HEK293 (cell line): ENCODE measurements at regions of chr17 and their contacts with region 1.

Region 1: GRCh38 chr17:77331301-77331864 is 190.6 kb downstream of the SEC14L1 start:
- H3K4me3 ChIP-seq: peak overlapping the region; percentile 19; the same call in 1 of the 2 replicates
- H3K27ac ChIP-seq: no peak overlapping the region
- H3K4me1 ChIP-seq: 0 out of 2 replicates have a peak, but pooled peaks cover 2% of the 10 kb centered on the region
- CTCF ChIP-seq: peak; percentile 98

Region 2: GRCh38 chr17:77235370-77235941 is 95.9 kb before region 1 on chr17:
- CTCF ChIA-PET with region 1: no interaction called
- POLR2A ChIA-PET with region 1: no interaction called
- H3K4me3 ChIP-seq: no peak overlapping the region
- H3K27ac ChIP-seq: no peak overlapping the region
- H3K4me1 ChIP-seq: no peaks in the 10 kb centered on the region
- CTCF ChIP-seq: no peak

Region 3: DNA sequence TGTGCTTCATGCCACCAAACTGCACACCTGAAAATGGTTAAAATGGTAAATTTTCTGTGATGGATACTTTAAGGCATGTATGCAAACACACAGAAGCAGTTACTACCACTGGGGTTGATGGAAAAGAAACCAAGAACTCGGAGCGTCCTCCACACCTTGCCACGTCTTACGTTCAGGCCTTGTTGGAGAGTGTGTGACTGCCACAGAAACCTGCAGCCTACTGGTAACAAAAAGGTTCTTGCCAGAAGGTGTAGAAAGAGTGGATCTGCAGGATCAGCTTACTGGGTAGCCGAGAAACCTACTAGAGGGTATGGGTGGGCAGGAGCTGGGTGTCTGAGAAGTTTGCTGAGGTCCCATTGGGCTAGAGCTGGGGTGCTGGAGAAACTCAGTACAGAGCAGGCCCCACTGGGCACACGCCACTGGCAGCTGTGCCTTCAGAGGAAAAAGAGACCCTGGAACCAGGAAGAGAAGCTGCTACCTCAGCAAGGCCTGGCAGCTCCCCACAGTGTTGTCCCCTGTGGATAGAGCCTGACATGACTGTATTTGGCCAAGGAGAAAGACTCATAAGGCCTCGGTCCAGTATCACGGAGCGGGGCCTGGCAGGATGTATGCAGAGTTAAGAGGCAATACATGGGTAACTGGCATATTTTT is 14.0 kb after region 1 on chr17:
- CTCF ChIA-PET with region 1: interaction called, 18 read pairs
- POLR2A ChIA-PET with region 1: no interaction called
- H3K4me3 ChIP-seq: no peak overlapping the region
- H3K27ac ChIP-seq: no peak overlapping the region
- H3K4me1 ChIP-seq: no peaks in the 10 kb centered on the region
- CTCF ChIP-seq: no peak

Region 4: GRCh38 chr17:77354420-77355241 is 23.2 kb after region 1 on chr17:
- CTCF ChIA-PET with region 1: interaction called, 13 read pairs
- POLR2A ChIA-PET with region 1: no interaction called
- H3K4me3 ChIP-seq: no peak overlapping the region
- H3K27ac ChIP-seq: no peak overlapping the region
- H3K4me1 ChIP-seq: no peaks in the 10 kb centered on the region
- CTCF ChIP-seq: no peak

Region 5: GRCh38 chr17:77400445-77400870 is 69.1 kb after region 1 on chr17:
- CTCF ChIA-PET with region 1: interaction called, 13 read pairs
- POLR2A ChIA-PET with region 1: no interaction called
- H3K4me3 ChIP-seq: no peak overlapping the region
- H3K27ac ChIP-seq: no peak overlapping the region
- H3K4me1 ChIP-seq: no peaks in the 10 kb centered on the region
- CTCF ChIP-seq: peak; percentile 47; the same call in 1 of the 2 replicates

Region 6: GRCh38 chr17:77494664-77495435 is 163.5 kb after region 1 on chr17:
- CTCF ChIA-PET with region 1: interaction called, 94 read pairs
- POLR2A ChIA-PET with region 1: no interaction called
- H3K4me3 ChIP-seq: no peak overlapping the region
- H3K27ac ChIP-seq: no peak overlapping the region
- H3K4me1 ChIP-seq: no peaks in the 10 kb centered on the region
- CTCF ChIP-seq: peak; percentile 92